Upper lobe of right lung (tissue), 1 donor: ENCODE measurements at regions of chr4 and their contacts with region 1.

Region 1: DNA sequence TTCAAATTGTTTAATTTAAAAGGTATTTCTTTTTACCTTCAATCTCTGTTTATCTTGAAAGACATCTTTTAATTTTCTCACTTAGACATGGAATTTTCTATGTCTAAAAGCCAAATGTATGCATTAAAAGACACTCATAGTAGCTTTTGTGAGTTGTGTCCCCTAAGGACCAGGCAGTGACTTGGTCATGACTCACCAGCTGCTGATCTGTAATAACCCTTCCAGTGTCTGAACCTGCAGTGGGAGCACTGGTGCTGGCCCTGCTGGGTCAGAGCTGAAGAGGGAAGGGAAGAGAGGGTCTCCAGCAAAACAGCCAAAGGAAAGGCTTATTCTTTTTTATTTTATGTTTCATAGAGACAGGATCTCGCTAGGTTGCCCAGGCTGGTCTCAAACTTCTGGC is 31.1 kb upstream of the SH3D19 start:
- DNase-seq: no peak
- ATAC-seq: no peak
- H3K4me3 ChIP-seq: no peak overlapping the region
- H3K27ac ChIP-seq: no peak overlapping the region
- H3K4me1 ChIP-seq: no peaks in the 10 kb centered on the region
- H3K27me3 ChIP-seq: no peaks in the 10 kb centered on the region
- CTCF ChIP-seq: no peak

Region 2: DNA sequence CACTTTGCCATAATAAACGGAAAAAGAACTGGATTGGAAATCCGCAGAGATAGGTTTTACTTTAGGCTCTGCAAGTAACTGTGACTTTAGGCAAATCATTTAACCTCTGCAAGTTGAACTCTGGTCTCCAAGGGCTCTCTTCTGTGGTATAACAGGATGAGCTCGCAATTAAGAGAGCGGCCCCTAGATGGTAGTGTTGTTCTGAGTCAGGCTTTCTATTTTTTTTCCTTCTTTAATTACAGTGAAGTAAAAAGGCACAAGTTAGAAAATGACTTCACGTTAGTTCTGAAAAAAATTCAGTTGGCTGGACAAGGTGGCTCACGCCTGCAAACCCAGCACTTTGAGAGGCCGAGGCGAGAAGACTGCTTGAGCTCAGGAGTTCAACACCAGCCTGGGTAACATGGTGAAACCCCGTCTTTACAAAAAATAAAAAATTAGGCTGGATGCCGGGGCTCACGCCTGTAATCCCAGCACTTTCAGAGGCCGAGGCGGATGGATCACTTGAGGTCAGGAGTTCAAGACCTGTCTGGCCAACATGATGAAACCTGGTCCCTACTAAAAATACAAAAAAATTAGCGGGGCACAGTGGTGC is 239.0 kb before region 1 on chr4:
- intact Hi-C with region 1: loop called (anchors 5 kb)
- DNase-seq: no peak
- ATAC-seq: peak; percentile 86
- H3K4me3 ChIP-seq: no peak overlapping the region
- H3K27ac ChIP-seq: peak overlapping the region; percentile 18
- H3K4me1 ChIP-seq: no peaks in the 10 kb centered on the region
- H3K27me3 ChIP-seq: no peaks in the 10 kb centered on the region
- CTCF ChIP-seq: peak; percentile 68

Region 3: DNA sequence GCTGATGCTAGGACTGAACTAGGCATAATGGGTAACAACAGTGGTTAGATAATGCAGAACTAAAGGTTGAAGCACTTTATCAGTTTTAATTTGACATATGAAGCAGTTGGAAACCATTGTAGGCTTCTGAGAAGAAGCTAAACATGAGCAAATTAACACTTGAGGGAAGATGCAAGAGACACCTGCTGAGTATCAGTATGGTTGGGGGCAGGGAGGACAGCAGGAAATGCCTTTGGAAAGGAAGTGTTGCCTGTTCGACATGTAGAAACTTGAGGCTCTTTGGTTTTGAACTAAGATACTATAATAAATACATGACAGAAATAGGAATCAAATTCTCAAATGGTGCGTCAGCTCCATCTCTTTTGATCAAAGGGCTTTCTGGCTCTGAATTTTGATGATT is 168.1 kb after region 1 on chr4:
- intact Hi-C with region 1: no loop called
- DNase-seq: no peak
- ATAC-seq: no peak
- H3K4me3 ChIP-seq: no peak overlapping the region
- H3K27ac ChIP-seq: no peak overlapping the region
- H3K4me1 ChIP-seq: no peaks in the 10 kb centered on the region
- H3K27me3 ChIP-seq: no peaks in the 10 kb centered on the region
- CTCF ChIP-seq: no peak